ENCODE measurements at regions of chr12 and their contacts with region 1.

Region 1: DNA sequence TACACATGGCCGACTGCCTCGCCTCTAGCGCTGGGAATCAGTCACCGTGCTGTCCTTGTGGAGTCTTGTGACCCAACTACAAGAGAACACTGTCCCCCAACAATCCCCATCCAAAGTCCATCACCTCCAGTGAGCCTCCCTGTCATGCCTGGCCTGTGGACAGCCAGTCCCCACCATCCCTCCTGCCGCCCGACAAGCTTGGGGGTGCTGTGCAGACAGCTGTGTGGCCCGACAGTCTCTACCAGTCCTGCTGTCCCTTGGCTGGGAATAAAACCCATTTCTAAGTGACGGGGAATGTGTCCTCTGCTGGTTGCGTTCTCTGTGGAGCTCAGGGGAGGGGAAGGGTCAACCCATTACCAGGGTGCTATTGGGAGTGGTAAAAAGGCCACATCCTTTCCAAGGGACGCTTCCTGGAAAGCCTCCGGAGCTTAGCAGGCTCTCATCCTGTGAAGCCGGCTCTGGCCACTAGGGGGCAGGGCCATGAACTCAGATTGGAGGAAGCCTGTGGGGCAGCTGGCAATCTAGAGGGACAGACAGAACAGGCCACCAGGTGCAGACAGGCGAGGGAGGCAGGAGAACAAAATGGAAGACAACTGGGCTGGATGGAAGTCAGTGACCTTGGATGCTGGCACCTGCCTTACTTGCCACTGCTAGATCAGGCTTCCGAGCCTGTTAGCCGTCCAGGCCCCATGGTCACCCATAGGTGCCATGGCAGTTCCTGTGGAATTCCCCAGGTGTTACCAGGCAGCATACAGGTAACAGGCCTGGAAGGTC is 12.0 kb upstream of the BLTP3B start:
- DNase-seq: no peak
- H3K4me3 ChIP-seq: no peak overlapping the region
- CTCF ChIP-seq: peak; percentile 82

Region 2: GRCh38 chr12:100142851-100143559 is 11.7 kb before region 1 on chr12 and contains the start of gene BLTP3B:
- CTCF ChIA-PET with region 1: interaction called, 39 read pairs
- POLR2A ChIA-PET with region 1: no interaction called
- DNase-seq: no peak
- H3K4me3 ChIP-seq: peak within 1 kb of the TSS; percentile 91
- CTCF ChIP-seq: no peak

Region 3: DNA sequence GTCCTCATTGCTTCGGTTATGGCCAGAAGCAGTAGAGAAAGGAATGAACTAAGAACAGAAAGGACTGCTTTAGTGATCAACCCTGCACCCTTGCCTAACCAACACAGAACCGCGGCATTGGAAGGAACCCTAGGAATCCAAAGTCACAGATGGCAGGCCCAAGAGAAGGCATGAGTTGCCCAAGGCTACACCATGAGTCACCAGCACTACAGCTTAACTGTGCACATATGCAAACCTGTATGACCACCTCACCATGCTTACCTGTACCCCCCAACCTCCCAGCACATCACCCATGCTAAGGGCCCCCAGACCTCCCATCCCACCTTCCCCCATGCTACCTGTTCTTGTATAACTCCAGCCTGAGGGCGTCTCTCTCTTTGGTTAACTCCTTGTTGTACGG is 13.9 kb after region 1 on chr12:
- CTCF ChIA-PET with region 1: interaction called, 52 read pairs
- POLR2A ChIA-PET with region 1: no interaction called
- DNase-seq: no peak
- H3K4me3 ChIP-seq: no peak overlapping the region
- CTCF ChIP-seq: no peak

Measured in AG04449 (cell line).